Naive thymus-derived CD4-positive, alpha-beta T cell (primary cell): ENCODE measurements at regions of chr6 and their contacts with region 1.

Region 1: DNA sequence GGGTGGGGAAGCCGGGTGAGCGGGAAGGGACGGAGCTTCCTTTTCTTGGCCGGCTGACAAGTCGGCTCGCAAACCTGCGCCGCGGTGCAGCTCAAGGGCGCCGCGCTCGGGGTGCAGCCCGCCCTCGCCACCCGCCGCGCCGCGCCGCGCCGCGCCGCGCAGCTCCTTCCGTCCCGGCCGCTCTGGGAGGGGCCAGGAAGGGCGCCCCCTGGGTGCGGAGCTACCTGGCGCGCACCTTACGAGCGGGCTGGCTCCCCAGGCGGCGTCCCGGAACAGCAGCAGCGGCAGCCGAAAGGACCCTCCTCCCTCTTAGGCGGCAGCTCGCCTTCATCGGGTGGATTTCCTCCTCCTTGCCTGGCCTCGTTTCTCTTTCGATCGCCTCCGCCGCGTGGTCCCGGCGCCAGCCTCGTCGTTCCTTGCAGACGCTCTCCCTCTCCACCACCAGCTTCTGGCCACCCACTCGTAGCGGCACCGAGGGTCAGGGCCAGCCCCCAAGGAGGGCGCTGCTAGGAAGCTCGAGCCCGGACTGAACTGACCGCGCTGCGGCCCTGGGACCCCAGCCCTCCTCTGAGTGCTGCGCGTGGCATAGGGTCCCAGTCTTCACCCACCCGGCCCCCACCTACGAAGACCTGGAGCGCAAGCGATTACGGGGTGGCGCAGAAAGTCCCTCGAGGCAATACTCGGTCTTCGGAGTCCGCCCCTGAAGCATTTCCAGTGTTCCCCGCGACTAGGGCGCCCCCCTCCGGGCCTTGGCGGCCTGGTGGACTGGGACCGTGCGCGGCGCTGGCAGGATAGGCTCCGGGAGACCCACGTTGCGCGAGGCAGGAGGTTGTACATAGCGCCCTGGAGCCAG is at the start of gene MAP3K5:
- DNase-seq: peak; percentile 89 to 96 (median 94)
- ATAC-seq: peak; percentile 87
- H3K4me3 ChIP-seq: peak within 1 kb of the TSS; percentile 100
- H3K4me3 Mint-ChIP-seq: peak within 1 kb of the TSS; percentile 90 to 97 (median 94)
- H3K27ac ChIP-seq: peak within 1 kb of the TSS; percentile 97
- H3K27ac Mint-ChIP-seq: peak within 1 kb of the TSS; percentile 92 to 99 (median 95)
- H3K4me1 ChIP-seq: peaks cover 13 to 18% of the 10 kb centered on the region in 2 donors
- H3K4me1 Mint-ChIP-seq: peaks cover 19 to 40% (median 35%) of the 10 kb centered on the region in 7 donors
- H3K27me3 ChIP-seq: no peaks in the 10 kb centered on the region
- H3K27me3 Mint-ChIP-seq: peaks cover 0 to 3% (median 0%) of the 10 kb centered on the region in 5 donors
- total RNA-seq, gene MAP3K5: 12.9 to 32.5 (median 14.0) TPM

Region 2: GRCh38 chr6:135497412-135498269 is 1295.0 kb before region 1 on chr6 and contains the start of gene AHI1:
- CTCF ChIA-PET with region 1: no interaction called
- POLR2A ChIA-PET with region 1: no interaction called
- intact Hi-C with region 1: loop called in 1 of 2 experiments (anchors 1 kb)
- DNase-seq: peak; percentile 65 to 94 (median 85)
- ATAC-seq: peak; percentile 89
- H3K4me3 ChIP-seq: peak within 1 kb of the TSS; percentile 64
- H3K4me3 Mint-ChIP-seq: peak within 1 kb of the TSS in 4 of 10 donors; percentile 32 to 53 (median 37)
- H3K27ac ChIP-seq: peak within 1 kb of the TSS; percentile 95
- H3K27ac Mint-ChIP-seq: no peak within 1 kb of the TSS
- H3K4me1 ChIP-seq: peaks cover 0 to 5% of the 10 kb centered on the region in 2 donors
- H3K4me1 Mint-ChIP-seq: peaks cover 4 to 19% (median 9%) of the 10 kb centered on the region in 7 donors
- H3K27me3 ChIP-seq: no peaks in the 10 kb centered on the region
- H3K27me3 Mint-ChIP-seq: peaks cover 0 to 3% (median 0%) of the 10 kb centered on the region in 5 donors
- total RNA-seq, gene AHI1: 12.5 to 31.3 (median 26.3) TPM

Region 3: DNA sequence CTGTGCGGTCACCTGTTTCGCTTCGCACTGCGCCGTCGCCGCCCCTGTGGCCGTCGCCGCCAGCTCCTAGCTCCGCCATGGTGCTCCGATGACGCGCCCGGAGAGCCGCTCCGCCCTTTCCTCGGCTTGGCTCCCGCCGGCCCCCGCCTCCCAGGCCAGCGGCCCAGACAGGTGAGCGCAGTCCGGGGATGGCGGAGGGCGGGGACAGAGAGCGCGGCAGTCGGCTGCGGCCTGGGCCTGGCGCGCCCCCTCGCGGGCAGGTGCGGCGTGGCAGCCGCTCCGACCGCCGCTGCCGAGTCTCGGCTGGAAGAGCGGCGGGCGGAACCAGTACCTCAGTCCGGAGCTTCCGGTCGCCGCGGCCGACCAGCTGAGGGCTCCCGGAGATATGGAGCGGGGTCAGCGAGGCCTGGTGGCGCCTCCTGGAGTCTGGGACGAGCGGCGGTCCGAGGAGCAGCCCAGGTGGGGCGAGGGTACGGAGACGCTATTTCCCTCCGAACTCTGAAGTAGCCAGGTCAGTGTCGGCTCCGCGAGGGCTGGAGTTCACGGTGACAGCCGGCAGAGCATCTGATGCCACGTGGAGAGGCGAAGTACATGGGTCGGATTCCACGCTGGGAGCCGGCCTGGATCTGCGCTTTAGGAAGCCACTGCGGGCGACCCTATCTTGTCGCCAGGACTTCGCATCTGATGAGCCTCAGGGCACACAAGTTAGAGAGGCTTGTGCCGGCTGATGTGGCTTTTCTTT is 242.1 kb before region 1 on chr6 and contains the start of gene MAP7:
- CTCF ChIA-PET with region 1: no interaction called
- POLR2A ChIA-PET with region 1: no interaction called
- intact Hi-C with region 1: loop called in 1 of 2 experiments (anchors 1 kb)
- DNase-seq: peak; percentile 30 to 74 (median 60)
- ATAC-seq: peak; percentile 91
- H3K4me3 ChIP-seq: peak within 1 kb of the TSS; percentile 46
- H3K4me3 Mint-ChIP-seq: peak within 1 kb of the TSS; percentile 58 to 82 (median 72)
- H3K27ac ChIP-seq: no peak within 1 kb of the TSS
- H3K27ac Mint-ChIP-seq: peak within 1 kb of the TSS in 1 of 9 donors; percentile 49
- H3K4me1 ChIP-seq: no peaks in the 10 kb centered on the region
- H3K4me1 Mint-ChIP-seq: peaks cover 0 to 16% (median 7%) of the 10 kb centered on the region in 7 donors
- H3K27me3 ChIP-seq: peaks cover 7 to 14% of the 10 kb centered on the region in 2 donors
- H3K27me3 Mint-ChIP-seq: peaks cover 34 to 64% (median 39%) of the 10 kb centered on the region in 5 donors
- total RNA-seq, gene MAP7: 0.14 to 1.1 (median 0.32) TPM

Region 4: DNA sequence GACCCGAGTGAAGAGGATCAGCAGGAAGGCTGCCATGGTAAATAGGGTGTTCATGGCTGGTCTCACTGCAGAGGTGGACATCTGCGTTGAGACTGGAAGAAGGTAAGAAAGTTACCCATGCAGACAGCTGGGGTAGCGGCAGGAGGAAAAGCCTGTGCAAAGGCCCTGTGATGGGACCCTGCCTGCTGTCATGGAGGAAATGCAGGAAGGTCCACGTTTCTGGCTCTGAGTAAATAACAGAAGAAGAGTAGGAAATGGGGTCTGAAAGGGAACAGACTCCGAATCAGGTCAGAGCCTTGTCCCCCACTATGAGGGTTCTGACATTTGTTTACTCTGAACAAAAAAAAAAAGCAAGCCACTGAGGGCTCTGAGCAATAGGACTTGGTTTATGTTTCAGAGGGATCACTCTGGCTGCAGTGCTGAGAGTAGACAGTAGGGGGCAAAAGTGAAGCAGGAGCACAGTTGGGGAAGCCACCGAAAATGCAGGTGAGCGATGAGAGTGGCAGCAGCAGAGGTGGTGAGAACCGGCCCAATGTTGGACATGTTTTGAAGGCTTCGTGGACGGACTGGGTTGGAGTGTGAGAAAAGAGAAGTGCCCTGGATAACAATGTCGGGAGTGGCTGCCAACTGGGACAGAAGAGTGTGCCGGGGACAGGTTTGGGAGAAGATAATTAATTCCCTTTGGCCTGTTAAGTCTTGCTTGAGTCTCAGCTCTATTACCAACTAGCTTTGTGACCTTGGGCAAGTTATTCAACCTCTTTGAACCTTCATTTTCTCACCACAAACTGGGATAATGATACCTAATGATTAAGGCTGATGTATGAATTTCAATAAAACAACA is 184.5 kb before region 1 on chr6:
- CTCF ChIA-PET with region 1: interaction called, 16 read pairs
- POLR2A ChIA-PET with region 1: no interaction called
- intact Hi-C with region 1: loop called (anchors 1 kb)
- DNase-seq: peak; percentile 47 to 77 (median 69)
- ATAC-seq: peak; percentile 90
- H3K4me3 ChIP-seq: no peak overlapping the region
- H3K4me3 Mint-ChIP-seq: no peak overlapping the region
- H3K27ac ChIP-seq: no peak overlapping the region
- H3K27ac Mint-ChIP-seq: peak overlapping the region in 3 of 9 donors; percentile 11 to 53 (median 46)
- H3K4me1 ChIP-seq: no peaks in the 10 kb centered on the region
- H3K4me1 Mint-ChIP-seq: peaks cover 0 to 23% (median 5%) of the 10 kb centered on the region in 7 donors
- H3K27me3 ChIP-seq: no peaks in the 10 kb centered on the region
- H3K27me3 Mint-ChIP-seq: no peaks in the 10 kb centered on the region

Region 5: GRCh38 chr6:136696238-136696637 is 96.4 kb before region 1 on chr6:
- CTCF ChIA-PET with region 1: interaction called, 5 read pairs
- POLR2A ChIA-PET with region 1: no interaction called
- intact Hi-C with region 1: loop called (anchors 1 kb)
- DNase-seq: no peak
- ATAC-seq: no peak
- H3K4me3 ChIP-seq: no peak overlapping the region
- H3K4me3 Mint-ChIP-seq: no peak overlapping the region
- H3K27ac ChIP-seq: no peak overlapping the region
- H3K27ac Mint-ChIP-seq: no peak overlapping the region
- H3K4me1 ChIP-seq: peaks cover 0 to 5% of the 10 kb centered on the region in 2 donors
- H3K4me1 Mint-ChIP-seq: peaks cover 0 to 30% (median 12%) of the 10 kb centered on the region in 7 donors
- H3K27me3 ChIP-seq: no peaks in the 10 kb centered on the region
- H3K27me3 Mint-ChIP-seq: no peaks in the 10 kb centered on the region

Region 6: GRCh38 chr6:136745300-136745699 is 47.3 kb before region 1 on chr6:
- CTCF ChIA-PET with region 1: interaction called, 55 read pairs
- POLR2A ChIA-PET with region 1: interaction called, 20 read pairs
- intact Hi-C with region 1: no loop called
- DNase-seq: no peak
- ATAC-seq: no peak
- H3K4me3 ChIP-seq: no peak overlapping the region
- H3K4me3 Mint-ChIP-seq: no peak overlapping the region
- H3K27ac ChIP-seq: no peak overlapping the region
- H3K27ac Mint-ChIP-seq: peak overlapping the region in 1 of 9 donors; percentile 52
- H3K4me1 ChIP-seq: peaks cover 10 to 12% of the 10 kb centered on the region in 2 donors
- H3K4me1 Mint-ChIP-seq: peaks cover 16 to 61% (median 31%) of the 10 kb centered on the region in 7 donors
- H3K27me3 ChIP-seq: no peaks in the 10 kb centered on the region
- H3K27me3 Mint-ChIP-seq: no peaks in the 10 kb centered on the region

Region 7: DNA sequence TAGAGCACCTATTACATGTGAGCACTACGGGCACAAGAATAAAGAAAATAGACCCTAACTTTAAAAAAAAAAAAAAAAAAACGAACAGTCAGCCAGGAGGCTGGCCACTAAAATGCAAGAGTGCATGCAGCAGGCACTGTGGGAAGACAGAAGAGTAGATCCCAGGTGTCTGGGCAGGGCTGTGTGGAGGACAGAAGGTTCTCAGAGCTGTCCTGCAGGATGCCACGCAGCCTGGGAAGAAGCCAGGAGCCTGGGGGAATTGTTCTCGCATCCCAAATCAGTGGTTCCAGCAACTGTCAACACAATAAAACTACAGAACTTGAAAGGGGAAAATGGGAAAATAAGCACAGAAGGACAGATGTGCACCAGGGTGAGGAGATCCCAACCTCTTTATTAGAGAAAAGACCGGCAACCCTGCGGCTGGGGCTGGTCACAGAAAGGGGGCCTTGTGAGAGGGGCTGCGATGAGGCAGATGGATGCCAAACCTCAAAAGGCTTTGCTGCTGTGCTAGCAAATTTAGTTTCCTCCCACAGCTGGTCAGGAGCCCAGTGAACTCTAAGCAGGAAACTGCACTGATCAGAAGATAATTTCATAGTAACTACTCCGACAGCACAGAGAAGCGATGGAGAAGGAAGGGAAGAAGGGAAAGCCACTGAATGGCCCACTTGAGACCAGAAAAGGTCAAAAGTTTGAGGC is 31.3 kb before region 1 on chr6:
- CTCF ChIA-PET with region 1: interaction called, 44 read pairs
- POLR2A ChIA-PET with region 1: interaction called, 77 read pairs
- intact Hi-C with region 1: loop called (anchors 1 kb)
- DNase-seq: peak in 2 of 9 donors; percentile 28 to 29
- ATAC-seq: peak; percentile 53
- H3K4me3 ChIP-seq: peak overlapping the region; percentile 12
- H3K4me3 Mint-ChIP-seq: peak overlapping the region; percentile 12 to 92 (median 72)
- H3K27ac ChIP-seq: no peak overlapping the region
- H3K27ac Mint-ChIP-seq: peak overlapping the region in 8 of 9 donors; percentile 11 to 95 (median 78)
- H3K4me1 ChIP-seq: peaks cover 51 to 54% of the 10 kb centered on the region in 2 donors
- H3K4me1 Mint-ChIP-seq: peaks cover 45 to 70% (median 56%) of the 10 kb centered on the region in 7 donors
- H3K27me3 ChIP-seq: no peaks in the 10 kb centered on the region
- H3K27me3 Mint-ChIP-seq: no peaks in the 10 kb centered on the region